ENCODE measurements at regions of chr6 and their contacts with region 1.

Region 1: DNA sequence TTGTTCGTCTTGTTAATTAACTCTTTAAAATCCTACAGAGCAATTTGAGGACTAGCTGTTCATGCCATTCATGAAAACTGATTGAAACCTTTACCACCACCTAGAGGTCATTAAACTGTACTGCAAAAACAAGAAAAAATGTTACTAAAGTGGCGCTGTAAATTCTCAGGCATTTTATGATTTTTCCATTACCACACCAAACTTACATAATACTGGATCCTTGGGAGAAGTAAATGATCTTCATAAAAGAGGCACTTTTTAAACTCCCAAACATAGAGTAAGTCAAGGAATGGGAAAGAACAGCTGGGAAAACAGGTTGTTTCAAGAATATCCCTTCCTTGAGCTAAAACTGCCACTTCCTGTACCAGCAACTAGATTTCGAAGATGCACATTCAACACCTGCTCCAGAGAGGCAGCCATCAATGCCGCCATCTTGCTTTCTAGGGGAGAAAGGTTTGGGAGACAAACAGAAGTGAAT is 54.3 kb downstream of the MYLIP start:
- DNase-seq: no peak
- H3K4me3 ChIP-seq: no peak overlapping the region
- H3K4me3 Mint-ChIP-seq: no peak overlapping the region
- H3K27ac Mint-ChIP-seq: peak overlapping the region; percentile 35
- H3K4me1 ChIP-seq: peaks cover 36% of the 10 kb centered on the region
- H3K4me1 Mint-ChIP-seq: peaks cover 8% of the 10 kb centered on the region
- H3K27me3 ChIP-seq: no peaks in the 10 kb centered on the region
- H3K27me3 Mint-ChIP-seq: no peaks in the 10 kb centered on the region
- CTCF ChIP-seq: peak; percentile 47 to 65

Region 2: DNA sequence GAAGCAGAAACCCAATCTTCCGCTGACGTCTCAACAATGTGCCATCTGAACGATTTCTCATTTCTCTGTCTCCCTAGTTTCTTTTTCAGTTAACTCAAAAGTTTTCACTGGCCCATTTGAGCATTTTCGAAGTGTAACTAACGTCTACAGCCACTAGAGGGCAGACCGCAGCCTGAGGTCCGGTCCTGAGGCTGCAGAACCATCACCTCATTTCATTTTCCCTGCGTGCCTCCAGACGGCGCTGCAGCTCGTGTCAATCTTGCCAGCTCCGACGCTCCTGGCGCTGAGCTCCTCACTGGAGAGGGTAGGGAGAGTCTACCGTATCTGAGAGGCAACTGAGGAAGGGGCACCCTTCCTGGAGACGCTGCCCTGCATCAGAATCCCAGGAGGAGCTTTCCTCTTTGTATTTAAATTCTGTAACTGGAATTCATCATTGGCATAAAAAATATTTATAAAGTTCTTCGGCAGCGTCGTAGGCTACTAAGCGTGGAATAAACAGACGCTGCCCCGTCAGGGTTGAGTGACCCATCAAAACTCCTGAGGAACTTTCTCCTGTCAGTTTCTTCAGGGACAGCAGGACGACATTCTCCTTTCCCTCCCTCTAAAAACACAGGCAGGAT is 491.9 kb before region 1 on chr6:
- CTCF ChIA-PET with region 1: interaction called, 12 read pairs
- POLR2A ChIA-PET with region 1: no interaction called
- intact Hi-C with region 1: loop called (anchors 5 kb)
- DNase-seq: peak; percentile 81
- H3K4me3 ChIP-seq: no peak overlapping the region
- H3K4me3 Mint-ChIP-seq: peak overlapping the region; percentile 12
- H3K27ac Mint-ChIP-seq: no peak overlapping the region
- H3K4me1 ChIP-seq: 0 out of 2 replicates have a peak, but pooled peaks cover 5% of the 10 kb centered on the region
- H3K4me1 Mint-ChIP-seq: no peaks in the 10 kb centered on the region
- H3K27me3 ChIP-seq: no peaks in the 10 kb centered on the region
- H3K27me3 Mint-ChIP-seq: no peaks in the 10 kb centered on the region
- CTCF ChIP-seq: peak; percentile 99

Region 3: DNA sequence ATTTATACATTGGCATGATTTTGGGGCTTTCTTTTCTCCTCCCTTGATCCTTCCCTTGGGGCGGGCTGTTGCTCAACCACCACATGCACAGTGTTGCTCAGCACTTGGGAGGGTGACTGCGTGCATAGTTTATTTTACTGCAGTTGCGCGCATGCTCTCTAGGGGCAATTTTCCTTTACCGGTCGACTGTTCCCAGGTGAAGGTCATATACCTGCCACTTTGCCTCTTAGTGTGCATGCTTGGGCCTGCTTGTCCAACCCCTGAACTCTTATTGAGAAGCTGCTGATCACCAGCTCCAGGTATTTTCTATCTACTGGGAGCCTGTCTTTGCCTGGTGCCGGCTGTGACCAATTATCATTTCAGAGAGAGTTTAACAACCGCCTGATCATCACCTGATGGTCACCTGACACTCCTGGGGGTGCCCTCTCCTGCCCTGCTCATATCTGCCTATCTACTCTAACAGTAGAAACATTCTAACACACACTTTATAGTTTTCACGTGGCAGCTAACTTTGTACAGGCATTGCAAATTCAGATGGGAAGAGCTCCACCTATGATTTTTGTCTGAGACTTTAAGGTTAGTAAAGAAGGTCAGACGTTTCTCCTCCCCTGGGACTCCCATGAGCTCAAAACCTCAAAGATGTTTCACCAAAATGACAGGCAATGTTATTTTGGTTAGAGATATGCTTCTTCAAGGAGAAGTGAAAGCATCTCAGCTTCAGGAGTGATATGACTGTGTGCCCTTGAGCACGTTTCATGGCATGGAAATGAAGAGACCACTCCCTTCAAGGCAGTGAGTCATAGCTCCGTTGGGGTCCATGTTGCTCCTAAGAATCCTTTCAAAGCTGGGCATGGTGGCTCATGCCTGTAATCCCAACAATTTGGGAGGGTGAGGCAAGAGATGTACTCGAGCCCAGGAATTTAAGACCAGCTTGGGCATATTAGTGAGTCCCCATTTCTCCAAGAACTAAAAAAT is 281.8 kb before region 1 on chr6:
- CTCF ChIA-PET with region 1: no interaction called
- POLR2A ChIA-PET with region 1: no interaction called
- intact Hi-C with region 1: loop called (anchors 10 kb)
- DNase-seq: peak; percentile 30 to 42
- H3K4me3 ChIP-seq: no peak overlapping the region
- H3K4me3 Mint-ChIP-seq: no peak overlapping the region
- H3K27ac Mint-ChIP-seq: no peak overlapping the region
- H3K4me1 ChIP-seq: peaks cover 13% of the 10 kb centered on the region; the same call in 1 of the 2 replicates
- H3K4me1 Mint-ChIP-seq: peaks cover 5% of the 10 kb centered on the region
- H3K27me3 ChIP-seq: no peaks in the 10 kb centered on the region
- H3K27me3 Mint-ChIP-seq: no peaks in the 10 kb centered on the region
- CTCF ChIP-seq: no peak

Region 4: GRCh38 chr6:16148498-16148897 is 34.7 kb before region 1 on chr6:
- CTCF ChIA-PET with region 1: interaction called, 12 read pairs
- POLR2A ChIA-PET with region 1: no interaction called
- intact Hi-C with region 1: no loop called
- DNase-seq: peak; percentile 75 to 81
- H3K4me3 ChIP-seq: no peak overlapping the region
- H3K4me3 Mint-ChIP-seq: peak overlapping the region; percentile 3
- H3K27ac Mint-ChIP-seq: peak overlapping the region; percentile 11
- H3K4me1 ChIP-seq: peaks cover 15% of the 10 kb centered on the region
- H3K4me1 Mint-ChIP-seq: peaks cover 22% of the 10 kb centered on the region
- H3K27me3 ChIP-seq: no peaks in the 10 kb centered on the region
- H3K27me3 Mint-ChIP-seq: no peaks in the 10 kb centered on the region
- CTCF ChIP-seq: no peak

Region 5: GRCh38 chr6:16168858-16169257 is 14.4 kb before region 1 on chr6:
- CTCF ChIA-PET with region 1: interaction called, 8 read pairs
- POLR2A ChIA-PET with region 1: no interaction called
- intact Hi-C with region 1: loop called (anchors 1 kb)
- DNase-seq: peak in 1 of 2 experiments; percentile 37
- H3K4me3 ChIP-seq: no peak overlapping the region
- H3K4me3 Mint-ChIP-seq: peak overlapping the region; percentile 65
- H3K27ac Mint-ChIP-seq: peak overlapping the region; percentile 88
- H3K4me1 ChIP-seq: peaks cover 74% of the 10 kb centered on the region
- H3K4me1 Mint-ChIP-seq: peaks cover 67% of the 10 kb centered on the region
- H3K27me3 ChIP-seq: no peaks in the 10 kb centered on the region
- H3K27me3 Mint-ChIP-seq: no peaks in the 10 kb centered on the region
- CTCF ChIP-seq: peak; percentile 27 to 57

Region 6: GRCh38 chr6:16206595-16207037 is 23.4 kb after region 1 on chr6:
- CTCF ChIA-PET with region 1: interaction called, 11 read pairs
- POLR2A ChIA-PET with region 1: no interaction called
- intact Hi-C with region 1: loop called (anchors 1 kb)
- DNase-seq: peak; percentile 56 to 72
- H3K4me3 ChIP-seq: no peak overlapping the region
- H3K4me3 Mint-ChIP-seq: no peak overlapping the region
- H3K27ac Mint-ChIP-seq: peak overlapping the region; percentile 39
- H3K4me1 ChIP-seq: peaks cover 21% of the 10 kb centered on the region
- H3K4me1 Mint-ChIP-seq: peaks cover 16% of the 10 kb centered on the region
- H3K27me3 ChIP-seq: no peaks in the 10 kb centered on the region
- H3K27me3 Mint-ChIP-seq: peaks cover 6% of the 10 kb centered on the region
- CTCF ChIP-seq: peak; percentile 82 to 93

Measured in Caco-2 (cell line).